ENCODE measurements at regions of chr7 and their contacts with region 1.

Region 1: GRCh38 chr7:142587578-142588191 is 161.6 kb upstream of the PRSS1 start:
- DNase-seq: peak; percentile 66
- H3K4me3 ChIP-seq: no peak overlapping the region
- H3K27ac ChIP-seq: no peak overlapping the region
- H3K4me1 ChIP-seq: peaks cover 10% of the 10 kb centered on the region
- H3K27me3 ChIP-seq: no peaks in the 10 kb centered on the region
- CTCF ChIP-seq: peak; percentile 63 to 82
- POLR2A ChIP-seq: no peak

Region 2: GRCh38 chr7:142523821-142524460 is 63.7 kb before region 1 on chr7:
- CTCF ChIA-PET with region 1: interaction called, 17 read pairs
- POLR2A ChIA-PET with region 1: no interaction called
- dilution Hi-C with region 1: no loop called
- intact Hi-C with region 1: no loop called
- DNase-seq: no peak
- H3K4me3 ChIP-seq: no peak overlapping the region
- H3K27ac ChIP-seq: no peak overlapping the region
- H3K4me1 ChIP-seq: no peaks in the 10 kb centered on the region
- H3K27me3 ChIP-seq: peaks cover 17 to 28% of the 10 kb centered on the region in 2 experiments
- CTCF ChIP-seq: peak in 1 of 2 donors; percentile 4
- POLR2A ChIP-seq: no peak

Region 3: DNA sequence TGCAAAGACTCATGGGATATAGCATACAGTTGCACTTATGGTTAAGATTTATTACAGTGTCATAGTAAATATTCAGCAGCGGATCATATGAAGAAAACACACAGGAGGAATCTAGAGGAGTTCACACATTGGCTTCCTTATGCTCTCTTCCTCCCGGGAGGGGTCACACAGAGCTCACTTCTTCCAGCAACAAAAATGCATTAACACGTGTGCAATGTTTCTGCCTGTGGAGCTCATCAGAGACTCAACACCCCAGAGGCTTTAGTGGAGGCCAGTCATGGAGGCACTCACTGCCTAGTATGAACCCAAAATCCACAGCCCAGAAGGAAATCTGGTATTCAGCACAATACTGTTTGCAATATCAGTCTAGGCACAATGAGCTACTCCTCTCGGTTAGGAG is 41.2 kb before region 1 on chr7:
- CTCF ChIA-PET with region 1: interaction called, 23 read pairs
- POLR2A ChIA-PET with region 1: no interaction called
- dilution Hi-C with region 1: no loop called
- intact Hi-C with region 1: no loop called
- DNase-seq: no peak
- H3K4me3 ChIP-seq: no peak overlapping the region
- H3K27ac ChIP-seq: no peak overlapping the region
- H3K4me1 ChIP-seq: no peaks in the 10 kb centered on the region
- H3K27me3 ChIP-seq: no peaks in the 10 kb centered on the region
- CTCF ChIP-seq: no peak
- POLR2A ChIP-seq: no peak

Region 4: GRCh38 chr7:142563470-142563869 is 24.2 kb before region 1 on chr7:
- CTCF ChIA-PET with region 1: interaction called, 88 read pairs
- POLR2A ChIA-PET with region 1: no interaction called
- dilution Hi-C with region 1: no loop called
- intact Hi-C with region 1: loop called (anchors 1 kb)
- DNase-seq: no peak
- H3K4me3 ChIP-seq: no peak overlapping the region
- H3K27ac ChIP-seq: no peak overlapping the region
- H3K4me1 ChIP-seq: peaks cover 19% of the 10 kb centered on the region
- H3K27me3 ChIP-seq: no peaks in the 10 kb centered on the region
- CTCF ChIP-seq: no peak
- POLR2A ChIP-seq: no peak

Region 5: GRCh38 chr7:142598297-142598696 is 10.6 kb after region 1 on chr7:
- CTCF ChIA-PET with region 1: interaction called, 41 read pairs
- POLR2A ChIA-PET with region 1: no interaction called
- dilution Hi-C with region 1: no loop called
- intact Hi-C with region 1: no loop called
- DNase-seq: no peak
- H3K4me3 ChIP-seq: no peak overlapping the region
- H3K27ac ChIP-seq: no peak overlapping the region
- H3K4me1 ChIP-seq: no peaks in the 10 kb centered on the region
- H3K27me3 ChIP-seq: no peaks in the 10 kb centered on the region
- CTCF ChIP-seq: no peak
- POLR2A ChIP-seq: no peak

Region 6: DNA sequence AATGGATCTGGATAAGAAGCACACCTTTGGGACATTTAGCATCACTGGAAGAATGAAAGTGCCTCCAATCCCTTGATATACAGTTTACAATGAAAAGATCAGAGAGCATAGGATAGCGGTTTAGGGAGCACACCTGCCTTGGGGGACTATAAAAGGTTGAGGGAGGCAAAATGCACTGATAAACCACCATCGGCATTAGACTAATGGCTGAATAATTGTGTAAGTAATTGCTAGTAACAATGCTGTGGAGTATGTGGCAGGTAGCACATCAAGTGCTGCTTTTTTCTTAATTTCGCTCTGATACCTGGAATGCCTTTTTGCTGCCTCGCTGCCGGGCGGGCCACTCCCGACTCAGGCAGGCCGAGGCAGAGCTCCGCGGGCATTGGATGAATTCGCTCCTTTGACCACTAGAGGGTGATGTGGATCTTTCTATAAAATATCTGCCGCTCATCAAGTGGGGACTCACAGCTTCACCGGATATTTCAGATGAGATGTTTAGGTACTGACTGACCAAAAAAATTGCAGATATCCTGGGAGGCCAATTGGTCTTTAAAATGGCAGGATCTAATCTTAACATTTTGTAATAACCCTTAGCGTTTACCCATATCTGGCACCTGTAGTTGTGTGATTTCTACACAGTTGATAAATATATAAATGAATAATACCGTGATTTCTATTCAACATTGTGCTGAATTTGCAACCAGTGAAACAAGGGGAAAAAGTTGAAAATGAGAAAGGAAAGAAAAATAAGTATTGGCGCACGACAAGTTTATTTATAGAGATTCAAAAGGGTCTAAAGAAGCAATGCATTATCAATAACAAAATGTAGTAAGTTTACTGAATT is 44.8 kb after region 1 on chr7:
- CTCF ChIA-PET with region 1: interaction called, 10 read pairs
- POLR2A ChIA-PET with region 1: no interaction called
- dilution Hi-C with region 1: no loop called
- intact Hi-C with region 1: no loop called
- DNase-seq: peak; percentile 74
- H3K4me3 ChIP-seq: no peak overlapping the region
- H3K27ac ChIP-seq: no peak overlapping the region
- H3K4me1 ChIP-seq: no peaks in the 10 kb centered on the region
- H3K27me3 ChIP-seq: peaks cover 1 to 3% of the 10 kb centered on the region in 2 experiments
- CTCF ChIP-seq: peak; percentile 69 to 73
- POLR2A ChIP-seq: no peak